HEK293 (cell line): ENCODE measurements at regions of chr19 and their contacts with region 1.

Region 1: DNA sequence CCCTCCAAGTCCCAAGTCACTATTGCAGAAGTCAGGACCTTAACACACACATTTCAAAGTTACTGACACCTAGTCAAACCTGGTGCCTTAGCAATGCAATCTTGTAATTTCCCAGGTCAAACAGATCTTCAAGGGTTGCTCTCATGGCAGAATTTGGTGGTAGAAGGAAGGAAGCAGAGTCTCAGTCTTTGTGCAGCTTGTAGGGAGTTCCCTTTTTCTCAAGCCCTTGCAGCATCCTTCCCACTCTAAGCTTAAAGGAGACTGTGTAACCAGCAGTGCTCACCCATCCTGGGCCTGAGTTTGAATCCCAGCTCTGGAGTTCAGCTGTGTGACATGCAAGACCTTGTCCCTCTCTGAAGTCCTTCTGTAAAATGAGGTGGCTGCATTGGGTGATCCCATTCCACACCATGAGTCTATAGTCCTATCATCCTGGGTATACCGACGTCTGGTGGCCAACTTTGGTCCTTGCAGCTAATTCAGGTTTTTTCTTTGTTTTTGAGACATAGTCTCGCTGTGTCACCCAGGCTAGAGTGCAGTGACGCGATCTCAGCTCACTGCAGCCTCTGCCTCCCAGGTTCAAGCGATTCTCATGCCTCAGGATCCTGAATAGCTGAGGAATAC is 9.8 kb downstream of the SIGLEC10 start:
- H3K4me3 ChIP-seq: no peak overlapping the region
- H3K27ac ChIP-seq: no peak overlapping the region
- H3K4me1 ChIP-seq: no peaks in the 10 kb centered on the region
- CTCF ChIP-seq: peak; percentile 39; the same call in 1 of the 2 replicates

Region 2: DNA sequence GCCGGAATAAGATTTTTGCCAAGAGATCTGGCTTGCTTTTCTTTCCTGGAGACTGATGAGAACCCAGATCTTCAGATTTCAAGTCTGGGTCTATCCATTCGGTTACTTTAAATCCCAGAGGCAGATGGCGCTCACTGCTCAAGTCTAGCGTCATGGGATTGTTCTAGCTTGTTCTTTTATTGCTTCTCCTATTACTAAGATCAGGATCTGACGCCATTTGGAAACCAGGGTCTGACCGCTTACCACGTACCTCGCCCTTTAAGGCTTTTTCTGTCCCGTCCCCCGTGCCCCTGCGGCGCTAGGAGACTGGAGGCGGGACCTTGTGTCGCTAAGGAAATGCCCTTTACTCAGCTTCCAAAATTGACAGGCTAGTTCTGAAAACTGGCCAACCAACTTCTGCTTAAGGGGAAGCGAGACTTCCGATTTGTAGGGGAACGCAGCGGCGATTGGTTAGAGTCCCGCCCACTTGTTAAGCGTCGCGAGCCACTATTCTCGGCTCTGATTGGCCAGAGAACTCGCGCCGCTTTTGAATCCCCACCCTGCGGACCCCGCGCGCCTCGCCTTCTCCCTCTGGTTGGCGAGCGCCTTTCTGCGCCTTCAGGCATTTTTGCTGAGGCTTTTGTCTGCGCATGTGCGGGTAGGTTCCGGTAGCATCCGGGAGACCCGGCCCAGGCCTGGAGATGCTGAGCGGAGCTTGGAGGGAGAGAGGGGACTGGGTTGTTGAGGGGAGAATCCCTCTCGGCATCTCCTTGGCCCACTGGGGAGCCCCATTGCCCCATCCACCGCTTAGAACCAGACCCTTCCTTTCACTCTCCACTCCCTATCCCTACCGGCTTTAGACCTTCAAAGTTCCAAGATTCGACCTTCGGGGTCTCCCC is 13.4 kb before region 1 on chr19:
- CTCF ChIA-PET with region 1: interaction called, 22 read pairs
- POLR2A ChIA-PET with region 1: interaction called, 3 read pairs
- H3K4me3 ChIP-seq: peak overlapping the region; percentile 76
- H3K27ac ChIP-seq: peak overlapping the region; percentile 35
- H3K4me1 ChIP-seq: peaks cover 4% of the 10 kb centered on the region; the same call in 1 of the 2 replicates
- CTCF ChIP-seq: no peak; the same call in 1 of the 2 replicates

Region 3: GRCh38 chr19:51422053-51422448 is 14.4 kb after region 1 on chr19:
- CTCF ChIA-PET with region 1: interaction called, 10 read pairs
- POLR2A ChIA-PET with region 1: no interaction called
- H3K4me3 ChIP-seq: no peak overlapping the region
- H3K27ac ChIP-seq: no peak overlapping the region
- H3K4me1 ChIP-seq: no peaks in the 10 kb centered on the region
- CTCF ChIP-seq: peak; percentile 86